ENCODE measurements at regions of chr7 and their contacts with region 1.

Region 1: GRCh38 chr7:25259587-25260243 is 31.4 kb upstream of the NPVF start:
- DNase-seq: peak; percentile 81
- ATAC-seq: peak; percentile 83
- H3K4me3 Mint-ChIP-seq: no peak overlapping the region
- H3K27ac Mint-ChIP-seq: no peak overlapping the region
- H3K4me1 Mint-ChIP-seq: peaks cover 29% of the 10 kb centered on the region
- H3K27me3 Mint-ChIP-seq: peaks cover 3% of the 10 kb centered on the region

Region 2: GRCh38 chr7:25109276-25109675 is 150.4 kb before region 1 on chr7:
- CTCF ChIA-PET with region 1: no interaction called
- POLR2A ChIA-PET with region 1: no interaction called
- intact Hi-C with region 1: no loop called
- DNase-seq: no peak
- ATAC-seq: no peak
- H3K4me3 Mint-ChIP-seq: no peak overlapping the region
- H3K27ac Mint-ChIP-seq: no peak overlapping the region
- H3K4me1 Mint-ChIP-seq: peaks cover 9% of the 10 kb centered on the region
- H3K27me3 Mint-ChIP-seq: no peaks in the 10 kb centered on the region

Region 3: GRCh38 chr7:25244254-25245033 is 15.3 kb before region 1 on chr7:
- CTCF ChIA-PET with region 1: interaction called, 12 read pairs
- POLR2A ChIA-PET with region 1: no interaction called
- intact Hi-C with region 1: no loop called
- DNase-seq: no peak
- ATAC-seq: no peak
- H3K4me3 Mint-ChIP-seq: no peak overlapping the region
- H3K27ac Mint-ChIP-seq: no peak overlapping the region
- H3K4me1 Mint-ChIP-seq: no peaks in the 10 kb centered on the region
- H3K27me3 Mint-ChIP-seq: peaks cover 9% of the 10 kb centered on the region

Region 4: GRCh38 chr7:25389489-25390106 is 129.9 kb after region 1 on chr7:
- CTCF ChIA-PET with region 1: interaction called, 35 read pairs
- POLR2A ChIA-PET with region 1: no interaction called
- intact Hi-C with region 1: loop called (anchors 1 kb)
- DNase-seq: peak; percentile 19
- ATAC-seq: no peak
- H3K4me3 Mint-ChIP-seq: no peak overlapping the region
- H3K27ac Mint-ChIP-seq: no peak overlapping the region
- H3K4me1 Mint-ChIP-seq: no peaks in the 10 kb centered on the region
- H3K27me3 Mint-ChIP-seq: no peaks in the 10 kb centered on the region

Measured in activated CD4-positive, alpha-beta T cell treated with anti-CD3 and anti-CD28 coated beads for 36 hours (primary cell).